ENCODE measurements at regions of chr16 and their contacts with region 1.

Region 1: GRCh38 chr16:81204798-81205680 is 33.5 kb upstream of the BCO1 start:
- DNase-seq: no peak
- H3K4me3 ChIP-seq: no peak overlapping the region
- H3K27ac ChIP-seq: no peak overlapping the region
- H3K4me1 ChIP-seq: no peaks in the 10 kb centered on the region
- H3K27me3 ChIP-seq: no peaks in the 10 kb centered on the region
- CTCF ChIP-seq: peak; percentile 86

Region 2: DNA sequence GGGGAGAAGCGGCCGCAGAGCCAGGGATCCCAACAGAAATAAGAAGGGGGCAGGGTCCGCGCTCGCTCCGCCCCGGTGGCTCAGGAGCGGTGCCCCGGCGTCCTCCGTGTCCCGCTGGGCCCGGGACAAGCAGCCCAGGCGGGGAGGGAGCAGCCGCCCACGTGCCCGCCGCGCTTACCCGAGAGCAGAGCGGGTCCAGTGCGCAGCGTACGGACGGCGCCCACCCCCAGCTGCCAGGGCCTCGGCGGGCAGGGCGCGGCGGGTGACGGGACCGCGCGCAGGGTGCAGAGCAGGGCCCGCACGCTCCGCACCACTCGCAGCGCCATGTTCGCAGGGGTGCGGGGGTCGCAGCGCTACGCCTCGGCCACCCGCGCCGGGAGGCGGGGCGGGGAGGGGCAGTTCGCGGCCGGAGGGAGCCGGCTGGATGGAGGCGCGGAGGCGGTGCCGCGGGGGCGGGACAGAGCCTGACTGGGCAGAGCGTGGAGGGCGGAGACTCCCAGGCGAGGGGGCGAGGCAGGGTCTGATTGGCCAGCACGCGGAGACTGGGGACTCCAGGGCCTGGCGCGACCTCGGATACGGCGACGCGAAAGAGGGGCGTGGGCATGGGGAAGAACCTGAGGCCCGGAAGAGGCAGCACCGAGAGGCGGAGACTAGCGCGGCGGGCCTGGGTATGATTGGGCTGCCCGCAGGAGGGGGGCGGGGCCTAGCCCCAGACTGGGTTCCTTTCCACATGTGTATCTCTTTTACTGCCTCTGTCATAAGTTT is 108.9 kb before region 1 on chr16 and contains the start of gene GCSH:
- CTCF ChIA-PET with region 1: interaction called, 12 read pairs
- POLR2A ChIA-PET with region 1: interaction called, 28 read pairs
- intact Hi-C with region 1: no loop called
- DNase-seq: peak; percentile 94 to 99
- H3K4me3 ChIP-seq: peak within 1 kb of the TSS; percentile 98
- H3K27ac ChIP-seq: peak within 1 kb of the TSS; percentile 77
- H3K4me1 ChIP-seq: peaks cover 29% of the 10 kb centered on the region
- H3K27me3 ChIP-seq: no peaks in the 10 kb centered on the region
- CTCF ChIP-seq: no peak
- total RNA-seq, gene GCSH: 51.7 and 71.1 TPM in 2 replicates

Region 3: DNA sequence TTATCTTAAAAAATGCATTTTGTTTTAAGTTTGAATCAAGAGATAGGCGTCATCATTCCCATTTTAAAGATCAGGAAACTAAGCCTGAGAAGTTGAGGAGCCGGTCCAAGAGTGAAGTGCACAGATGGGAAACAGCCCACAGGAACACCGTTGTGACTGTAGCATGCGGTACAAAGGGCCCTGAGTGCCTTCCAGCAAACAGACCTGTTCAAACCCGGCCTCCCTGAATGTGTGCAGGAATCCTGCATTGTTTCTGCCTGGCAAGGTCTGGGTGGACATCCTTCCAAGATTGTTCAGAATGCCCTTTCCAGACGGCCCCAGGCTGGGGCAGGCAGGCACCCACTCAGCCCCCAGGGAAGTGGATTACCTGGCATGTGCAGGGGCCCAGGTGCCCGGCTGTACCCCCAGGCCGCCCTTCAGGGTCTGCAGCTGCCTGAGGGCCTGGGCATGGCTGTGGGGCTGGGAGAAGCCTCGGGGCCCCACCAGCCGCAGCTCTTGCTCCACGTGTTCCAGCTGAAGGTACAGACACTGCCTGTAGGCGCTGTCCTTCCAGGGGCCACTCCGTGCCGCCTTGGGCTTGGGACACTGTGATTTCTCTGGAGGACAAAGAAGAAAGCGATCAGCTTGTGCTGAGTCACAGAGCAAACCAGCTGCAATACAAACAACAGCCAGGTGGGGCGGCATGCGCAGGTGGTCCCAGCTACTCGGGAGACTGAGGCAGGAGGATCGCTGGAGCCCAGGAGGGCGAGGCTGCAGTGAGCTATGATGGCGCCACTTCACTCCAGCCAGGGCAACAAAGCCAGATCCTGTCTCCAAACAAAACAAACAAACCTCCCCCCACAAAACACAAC is 63.9 kb before region 1 on chr16:
- CTCF ChIA-PET with region 1: interaction called, 14 read pairs
- POLR2A ChIA-PET with region 1: interaction called, 9 read pairs
- intact Hi-C with region 1: no loop called
- DNase-seq: peak in 1 of 2 experiments; percentile 19
- H3K4me3 ChIP-seq: no peak overlapping the region
- H3K27ac ChIP-seq: peak overlapping the region; percentile 98
- H3K4me1 ChIP-seq: peaks cover 58% of the 10 kb centered on the region
- H3K27me3 ChIP-seq: no peaks in the 10 kb centered on the region
- CTCF ChIP-seq: peak; percentile 58

Region 4: GRCh38 chr16:81181013-81181720 is 23.9 kb before region 1 on chr16:
- CTCF ChIA-PET with region 1: interaction called, 28 read pairs
- POLR2A ChIA-PET with region 1: no interaction called
- intact Hi-C with region 1: no loop called
- DNase-seq: peak; percentile 92 to 97
- H3K4me3 ChIP-seq: peak overlapping the region; percentile 42
- H3K27ac ChIP-seq: peak overlapping the region; percentile 72
- H3K4me1 ChIP-seq: peaks cover 30% of the 10 kb centered on the region
- H3K27me3 ChIP-seq: no peaks in the 10 kb centered on the region
- CTCF ChIP-seq: no peak

Region 5: DNA sequence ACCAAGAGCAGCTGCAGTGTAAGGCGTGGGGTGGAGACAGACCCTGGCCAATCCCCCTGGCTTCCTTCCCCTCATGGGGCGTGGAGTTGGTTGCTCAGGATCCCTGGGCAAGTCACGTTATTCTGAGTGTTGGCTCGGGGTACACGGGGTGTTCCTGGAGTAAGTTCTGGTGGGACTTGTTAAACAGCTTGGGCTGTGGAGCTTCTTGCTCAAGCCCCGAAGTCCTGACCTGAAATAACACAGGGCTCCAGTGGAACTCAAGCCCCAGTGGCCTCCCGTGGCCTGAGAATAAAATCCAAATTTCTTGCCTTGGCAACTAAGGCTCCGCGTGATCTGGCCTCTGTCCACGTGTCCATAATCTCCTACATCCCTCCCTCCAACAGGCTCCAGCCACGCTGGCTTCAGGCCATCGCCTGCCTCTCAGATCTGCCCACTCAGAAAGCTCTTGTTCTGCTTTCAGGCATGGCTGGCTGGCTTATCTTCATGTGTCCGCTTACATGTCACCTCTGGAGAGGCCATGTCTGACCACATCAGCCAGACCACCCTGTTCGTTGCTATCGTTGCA is 15.9 kb before region 1 on chr16:
- CTCF ChIA-PET with region 1: interaction called, 14 read pairs
- POLR2A ChIA-PET with region 1: interaction called, 3 read pairs
- intact Hi-C with region 1: no loop called
- DNase-seq: no peak
- H3K4me3 ChIP-seq: no peak overlapping the region
- H3K27ac ChIP-seq: no peak overlapping the region
- H3K4me1 ChIP-seq: peaks cover 16% of the 10 kb centered on the region
- H3K27me3 ChIP-seq: no peaks in the 10 kb centered on the region
- CTCF ChIP-seq: no peak

Region 6: GRCh38 chr16:81307760-81308159 is 102.7 kb after region 1 on chr16:
- CTCF ChIA-PET with region 1: no interaction called
- POLR2A ChIA-PET with region 1: no interaction called
- intact Hi-C with region 1: no loop called
- DNase-seq: no peak
- H3K4me3 ChIP-seq: no peak overlapping the region
- H3K27ac ChIP-seq: no peak overlapping the region
- H3K4me1 ChIP-seq: no peaks in the 10 kb centered on the region
- H3K27me3 ChIP-seq: no peaks in the 10 kb centered on the region
- CTCF ChIP-seq: no peak

Region 7: DNA sequence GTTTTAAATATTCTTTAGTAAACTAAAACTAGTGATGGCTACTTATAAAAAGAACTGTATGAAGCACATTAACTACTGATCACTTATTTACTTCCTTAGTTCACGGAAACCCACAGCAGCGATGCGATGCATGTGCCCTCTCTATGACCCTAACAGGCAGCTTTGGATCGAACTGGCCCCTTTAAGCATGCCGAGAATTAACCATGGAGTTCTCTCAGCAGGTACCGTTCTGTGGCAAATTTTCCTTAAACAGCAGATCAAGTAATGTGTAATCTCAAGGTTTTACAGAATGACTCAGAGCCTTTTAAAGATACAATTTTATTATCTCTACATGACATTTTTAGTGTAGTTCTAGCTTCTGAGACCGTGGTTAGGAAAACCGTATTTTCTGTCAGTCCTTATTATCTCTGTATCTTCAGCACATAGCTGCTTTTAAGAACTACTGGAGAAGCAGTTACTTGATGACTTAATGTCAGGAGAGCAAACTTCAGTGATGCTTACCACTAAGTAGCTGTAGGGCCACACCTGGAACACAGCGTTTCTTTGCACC is 152.7 kb after region 1 on chr16:
- CTCF ChIA-PET with region 1: no interaction called
- POLR2A ChIA-PET with region 1: no interaction called
- intact Hi-C with region 1: loop called (anchors 5 kb)
- DNase-seq: no peak
- H3K4me3 ChIP-seq: no peak overlapping the region
- H3K27ac ChIP-seq: no peak overlapping the region
- H3K4me1 ChIP-seq: no peaks in the 10 kb centered on the region
- H3K27me3 ChIP-seq: no peaks in the 10 kb centered on the region
- CTCF ChIP-seq: no peak

Region 8: GRCh38 chr16:81803332-81803731 is 598.3 kb after region 1 on chr16:
- CTCF ChIA-PET with region 1: interaction called, 14 read pairs
- POLR2A ChIA-PET with region 1: no interaction called
- intact Hi-C with region 1: no loop called
- DNase-seq: no peak
- H3K4me3 ChIP-seq: no peak overlapping the region
- H3K27ac ChIP-seq: no peak overlapping the region
- H3K4me1 ChIP-seq: no peaks in the 10 kb centered on the region
- H3K27me3 ChIP-seq: no peaks in the 10 kb centered on the region
- CTCF ChIP-seq: no peak

Measured in PC-9 (cell line).